Natural killer cell (primary cell): ENCODE measurements at regions of chr13 and their contacts with region 1.

Region 1: DNA sequence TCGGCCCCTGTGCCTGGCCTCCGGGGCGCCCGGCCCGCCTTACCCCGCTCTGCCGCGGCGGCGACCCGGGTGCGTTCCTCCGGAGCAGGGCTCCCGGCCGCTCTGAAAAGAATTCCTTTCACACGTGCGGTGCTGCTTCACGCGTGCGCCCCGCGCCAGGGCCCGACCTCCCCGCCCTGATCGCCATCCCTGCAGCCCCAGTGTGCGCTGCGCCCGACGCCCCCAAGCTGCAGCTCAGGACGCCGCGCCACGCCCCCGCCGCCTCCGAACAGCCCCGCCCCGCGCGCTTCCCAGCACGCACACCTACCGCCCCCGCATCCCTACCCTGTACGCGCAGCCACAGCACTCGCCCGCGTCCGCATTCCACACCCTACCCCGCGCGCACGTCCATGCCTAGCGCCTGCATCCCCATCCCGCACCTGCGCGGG is at the start of gene GJA3:
- DNase-seq: peak in 1 of 2 donors; percentile 69
- ATAC-seq: peak; percentile 45 to 47 (median 46)
- H3K4me3 ChIP-seq: peak within 1 kb of the TSS; percentile 23
- H3K4me3 Mint-ChIP-seq: peak within 1 kb of the TSS; percentile 83
- H3K27ac ChIP-seq: no peak within 1 kb of the TSS
- H3K27ac Mint-ChIP-seq: no peak within 1 kb of the TSS
- H3K4me1 ChIP-seq: peaks cover 10% of the 10 kb centered on the region
- H3K4me1 Mint-ChIP-seq: peaks cover 4 to 13% of the 10 kb centered on the region in 2 donors
- H3K27me3 ChIP-seq: peaks cover 26% of the 10 kb centered on the region
- H3K27me3 Mint-ChIP-seq: peaks cover 32 to 40% of the 10 kb centered on the region in 2 donors
- CTCF ChIP-seq: no peak
- total RNA-seq, gene GJA3: 0.18 TPM in 1 of 3 donors, not detected in the others

Region 2: GRCh38 chr13:20057963-20058362 is 102.9 kb before region 1 on chr13:
- intact Hi-C with region 1: loop called (anchors 1 kb)
- DNase-seq: no peak
- ATAC-seq: no peak
- H3K4me3 ChIP-seq: no peak overlapping the region
- H3K4me3 Mint-ChIP-seq: no peak overlapping the region
- H3K27ac ChIP-seq: no peak overlapping the region
- H3K27ac Mint-ChIP-seq: no peak overlapping the region
- H3K4me1 ChIP-seq: no peaks in the 10 kb centered on the region
- H3K4me1 Mint-ChIP-seq: no peaks in the 10 kb centered on the region
- H3K27me3 ChIP-seq: no peaks in the 10 kb centered on the region
- H3K27me3 Mint-ChIP-seq: no peaks in the 10 kb centered on the region
- CTCF ChIP-seq: no peak

Region 3: DNA sequence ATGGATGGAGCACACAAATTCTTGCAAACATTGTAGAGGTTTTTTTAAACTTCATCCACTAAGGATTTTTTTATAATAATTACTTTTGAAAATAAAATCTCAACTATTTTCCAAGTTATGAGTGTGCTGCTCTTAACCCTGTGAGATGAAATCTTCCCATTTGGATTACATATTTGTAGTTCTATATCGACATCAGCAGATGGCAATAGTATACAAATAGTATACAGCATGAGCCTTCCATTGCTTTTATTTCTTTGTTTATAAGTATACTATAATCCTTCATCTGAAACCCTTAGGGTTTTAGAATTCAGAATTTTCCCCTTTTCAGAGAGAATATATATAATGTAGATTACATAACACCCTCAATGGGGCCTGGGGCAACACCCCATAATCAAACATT is 70.5 kb before region 1 on chr13:
- intact Hi-C with region 1: loop called (anchors 1 kb)
- DNase-seq: peak in 1 of 2 donors; percentile 22
- ATAC-seq: no peak
- H3K4me3 ChIP-seq: no peak overlapping the region
- H3K4me3 Mint-ChIP-seq: no peak overlapping the region
- H3K27ac ChIP-seq: no peak overlapping the region
- H3K27ac Mint-ChIP-seq: no peak overlapping the region
- H3K4me1 ChIP-seq: no peaks in the 10 kb centered on the region
- H3K4me1 Mint-ChIP-seq: no peaks in the 10 kb centered on the region
- H3K27me3 ChIP-seq: no peaks in the 10 kb centered on the region
- H3K27me3 Mint-ChIP-seq: no peaks in the 10 kb centered on the region
- CTCF ChIP-seq: peak; percentile 12

Region 4: DNA sequence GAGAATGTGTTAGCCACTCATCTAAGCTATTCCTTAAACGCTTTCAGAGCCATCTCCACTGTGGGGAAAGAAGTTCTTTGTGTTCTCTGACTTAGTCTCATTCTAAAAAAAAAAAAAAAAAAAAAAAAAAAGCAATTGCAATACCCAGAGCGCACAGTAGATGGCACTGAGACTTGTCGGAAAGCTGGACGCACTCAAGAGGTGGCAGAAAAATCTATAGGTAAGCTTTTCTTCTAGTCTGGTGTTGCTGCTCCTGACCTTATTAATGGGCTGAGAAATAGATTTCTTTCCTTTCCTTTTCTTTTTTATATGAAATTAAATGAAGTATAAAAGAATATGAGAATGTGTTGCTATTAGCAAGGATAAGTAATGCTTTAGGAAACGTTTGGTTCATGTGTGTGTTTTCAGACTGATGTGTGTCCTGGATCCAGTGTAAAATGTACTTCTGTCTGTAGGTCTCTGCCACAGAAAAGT is 36.5 kb after region 1 on chr13:
- intact Hi-C with region 1: no loop called
- DNase-seq: peak in 1 of 2 donors; percentile 75
- ATAC-seq: peak; percentile 70 to 81 (median 77)
- H3K4me3 ChIP-seq: no peak overlapping the region
- H3K4me3 Mint-ChIP-seq: no peak overlapping the region
- H3K27ac ChIP-seq: no peak overlapping the region
- H3K27ac Mint-ChIP-seq: no peak overlapping the region
- H3K4me1 ChIP-seq: peaks cover 17% of the 10 kb centered on the region
- H3K4me1 Mint-ChIP-seq: peaks cover 14 to 18% of the 10 kb centered on the region in 2 donors
- H3K27me3 ChIP-seq: peaks cover 36% of the 10 kb centered on the region
- H3K27me3 Mint-ChIP-seq: peaks cover 53 to 61% of the 10 kb centered on the region in 2 donors
- CTCF ChIP-seq: peak; percentile 86